ENCODE measurements at regions of chr6 and their contacts with region 1.

Region 1: GRCh38 chr6:149082286-149082707 is 235.2 kb upstream of the TAB2 start:
- DNase-seq: peak in 1 of 2 experiments; percentile 78
- H3K4me3 ChIP-seq: no peak overlapping the region
- H3K27ac ChIP-seq: no peak overlapping the region
- H3K4me1 ChIP-seq: peaks cover 0 to 3% (median 0%) of the 10 kb centered on the region in 4 experiments; a peak in 3 of 7 replicates
- H3K27me3 ChIP-seq: no peaks in the 10 kb centered on the region
- CTCF ChIP-seq: peak; percentile 58 to 83 (median 78)
- EP300 ChIP-seq: no peak
- POLR2A ChIP-seq: no peak
- RAD21 ChIP-seq: peak; percentile 90 to 91

Region 2: GRCh38 chr6:149094156-149094555 is 11.9 kb after region 1 on chr6:
- CTCF ChIA-PET with region 1: interaction called, 12 read pairs
- POLR2A ChIA-PET with region 1: interaction called, 3 read pairs
- DNase-seq: peak in 1 of 2 experiments; percentile 7
- H3K4me3 ChIP-seq: no peak overlapping the region
- H3K27ac ChIP-seq: no peak overlapping the region
- H3K4me1 ChIP-seq: peaks cover 3 to 6% (median 4%) of the 10 kb centered on the region in 4 experiments; a peak in 4 of 7 replicates
- H3K27me3 ChIP-seq: no peaks in the 10 kb centered on the region
- CTCF ChIP-seq: no peak
- EP300 ChIP-seq: no peak
- POLR2A ChIP-seq: no peak
- RAD21 ChIP-seq: no peak

Measured in H1 (cell line).